ENCODE measurements at regions of chr19 and their contacts with region 1.

Region 1: GRCh38 chr19:9796113-9796773 is 22.6 kb downstream of the FBXL12 start:
- DNase-seq: peak; percentile 91
- ATAC-seq: peak; percentile 45
- H3K4me3 Mint-ChIP-seq: no peak overlapping the region
- H3K27ac Mint-ChIP-seq: peak overlapping the region; percentile 5
- H3K4me1 Mint-ChIP-seq: peaks cover 22% of the 10 kb centered on the region
- H3K27me3 Mint-ChIP-seq: no peaks in the 10 kb centered on the region

Region 2: DNA sequence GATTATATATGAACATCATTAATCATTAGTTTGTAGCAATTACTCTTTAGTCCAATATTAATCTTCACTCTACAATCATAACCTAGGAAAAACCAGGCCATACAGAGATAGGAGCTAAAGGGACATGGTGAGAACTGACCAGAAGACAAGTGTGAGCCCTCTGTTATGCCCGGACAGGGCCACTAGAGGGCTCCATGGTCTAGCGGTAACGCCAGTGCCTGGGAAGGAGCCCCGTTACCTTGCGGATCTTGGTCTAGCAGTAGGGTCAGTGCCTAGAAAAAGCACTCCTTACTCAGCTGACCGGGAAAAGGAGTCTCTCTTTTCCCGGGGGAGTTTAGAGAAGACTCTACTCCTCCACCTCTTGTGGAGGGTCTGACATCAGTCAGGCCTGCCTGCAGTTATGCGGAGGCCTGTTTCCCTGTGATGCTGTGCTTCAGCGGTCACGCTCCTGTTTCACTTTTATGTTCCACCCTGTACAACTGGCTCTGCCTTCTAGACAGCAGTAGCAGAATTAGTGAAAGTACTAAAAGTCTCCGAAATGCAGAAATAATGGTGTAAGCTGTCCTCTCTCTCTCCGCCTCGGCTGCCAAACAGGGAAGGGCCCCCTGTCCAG is 590.6 kb before region 1 on chr19:
- CTCF ChIA-PET with region 1: interaction called, 4 read pairs
- POLR2A ChIA-PET with region 1: no interaction called
- intact Hi-C with region 1: loop called (anchors 1 to 5 kb)
- DNase-seq: peak; percentile 79
- ATAC-seq: peak; percentile 75
- H3K4me3 Mint-ChIP-seq: no peak overlapping the region
- H3K27ac Mint-ChIP-seq: no peak overlapping the region
- H3K4me1 Mint-ChIP-seq: no peaks in the 10 kb centered on the region
- H3K27me3 Mint-ChIP-seq: peaks cover 9% of the 10 kb centered on the region

Region 3: GRCh38 chr19:9435279-9436268 is 360.7 kb before region 1 on chr19 and contains the start of gene ZNF266:
- CTCF ChIA-PET with region 1: no interaction called
- POLR2A ChIA-PET with region 1: no interaction called
- intact Hi-C with region 1: loop called in 1 of 2 experiments (anchors 2 kb)
- DNase-seq: peak; percentile 97
- ATAC-seq: peak; percentile 91
- H3K4me3 Mint-ChIP-seq: peak within 1 kb of the TSS; percentile 95
- H3K27ac Mint-ChIP-seq: peak within 1 kb of the TSS; percentile 99
- H3K4me1 Mint-ChIP-seq: peaks cover 33% of the 10 kb centered on the region
- H3K27me3 Mint-ChIP-seq: no peaks in the 10 kb centered on the region
- total RNA-seq, gene ZNF266: 17.1 to 22.4 TPM

Region 4: GRCh38 chr19:9621156-9622037 is 174.8 kb before region 1 on chr19 and contains the start of gene ZNF561:
- CTCF ChIA-PET with region 1: interaction called, 24 read pairs
- POLR2A ChIA-PET with region 1: no interaction called
- intact Hi-C with region 1: loop called (anchors 1 kb)
- DNase-seq: peak; percentile 93
- ATAC-seq: peak; percentile 89
- H3K4me3 Mint-ChIP-seq: peak within 1 kb of the TSS; percentile 89
- H3K27ac Mint-ChIP-seq: peak within 1 kb of the TSS; percentile 96
- H3K4me1 Mint-ChIP-seq: peaks cover 23% of the 10 kb centered on the region
- H3K27me3 Mint-ChIP-seq: no peaks in the 10 kb centered on the region
- total RNA-seq, gene ZNF561: 19.1 to 22.7 TPM

Region 5: GRCh38 chr19:9785367-9786331 is 10.6 kb before region 1 on chr19:
- CTCF ChIA-PET with region 1: no interaction called
- POLR2A ChIA-PET with region 1: no interaction called
- intact Hi-C with region 1: loop called in 1 of 2 experiments (anchors 1 kb)
- DNase-seq: peak; percentile 100
- ATAC-seq: peak; percentile 89
- H3K4me3 Mint-ChIP-seq: peak overlapping the region; percentile 84
- H3K27ac Mint-ChIP-seq: peak overlapping the region; percentile 98
- H3K4me1 Mint-ChIP-seq: peaks cover 26% of the 10 kb centered on the region
- H3K27me3 Mint-ChIP-seq: no peaks in the 10 kb centered on the region

Region 6: DNA sequence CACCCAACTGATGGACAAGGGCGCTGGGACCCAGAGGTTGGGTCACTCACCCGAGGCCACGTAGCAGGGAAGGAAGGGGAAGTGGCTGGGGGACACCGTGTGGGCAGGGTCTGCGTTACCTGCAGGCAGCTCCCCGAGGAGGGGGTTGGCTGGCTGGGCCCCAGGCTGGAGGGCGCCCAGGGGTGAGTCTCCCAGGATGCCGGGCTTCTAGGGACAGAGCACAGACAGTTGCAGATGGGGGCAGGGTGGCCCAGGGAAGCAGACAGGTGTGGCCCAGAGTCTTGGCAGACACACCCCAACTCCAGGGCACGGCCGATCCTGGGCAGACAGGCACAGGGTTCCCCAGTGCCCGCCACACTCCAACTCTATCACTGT is 525.2 kb after region 1 on chr19:
- CTCF ChIA-PET with region 1: no interaction called
- POLR2A ChIA-PET with region 1: no interaction called
- intact Hi-C with region 1: no loop called
- DNase-seq: no peak
- ATAC-seq: no peak
- H3K4me3 Mint-ChIP-seq: no peak overlapping the region
- H3K27ac Mint-ChIP-seq: no peak overlapping the region
- H3K4me1 Mint-ChIP-seq: no peaks in the 10 kb centered on the region
- H3K27me3 Mint-ChIP-seq: no peaks in the 10 kb centered on the region

Measured in activated CD4-positive, alpha-beta T cell treated with anti-CD3 and anti-CD28 coated beads for 36 hours (primary cell).